ENCODE measurements at regions of chr10 and their contacts with region 1.

Region 1: DNA sequence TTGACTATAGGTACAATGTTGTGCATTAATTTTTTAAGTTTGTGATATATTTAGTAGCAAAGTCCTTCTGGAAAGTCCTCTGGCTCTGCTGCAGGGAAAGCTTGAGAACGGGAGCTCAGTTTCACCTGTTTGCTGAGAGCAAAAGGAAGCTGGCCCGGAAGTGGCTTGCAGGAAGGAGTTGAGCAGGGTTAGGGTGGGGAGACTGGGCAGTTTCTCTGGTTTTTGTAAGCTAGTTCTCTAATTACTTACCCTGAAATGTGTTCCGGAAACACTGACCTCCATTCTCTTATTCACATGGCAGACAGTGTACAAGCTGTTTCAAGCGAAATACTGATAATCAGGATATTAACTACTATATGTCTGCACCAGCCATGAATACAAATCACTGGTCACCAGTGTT is 22.3 kb downstream of the MAP3K8 start:
- DNase-seq: peak in 1 of 2 donors; percentile 61
- ATAC-seq: peak; percentile 71 to 75 (median 73)
- H3K4me3 ChIP-seq: peak overlapping the region; percentile 5
- H3K4me3 Mint-ChIP-seq: peak overlapping the region; percentile 75
- H3K27ac ChIP-seq: peak overlapping the region; percentile 82
- H3K27ac Mint-ChIP-seq: peak overlapping the region; percentile 83 to 88
- H3K4me1 ChIP-seq: peaks cover 45% of the 10 kb centered on the region
- H3K4me1 Mint-ChIP-seq: peaks cover 32 to 44% of the 10 kb centered on the region in 2 donors
- H3K27me3 ChIP-seq: no peaks in the 10 kb centered on the region
- H3K27me3 Mint-ChIP-seq: no peaks in the 10 kb centered on the region
- CTCF ChIP-seq: no peak

Region 2: DNA sequence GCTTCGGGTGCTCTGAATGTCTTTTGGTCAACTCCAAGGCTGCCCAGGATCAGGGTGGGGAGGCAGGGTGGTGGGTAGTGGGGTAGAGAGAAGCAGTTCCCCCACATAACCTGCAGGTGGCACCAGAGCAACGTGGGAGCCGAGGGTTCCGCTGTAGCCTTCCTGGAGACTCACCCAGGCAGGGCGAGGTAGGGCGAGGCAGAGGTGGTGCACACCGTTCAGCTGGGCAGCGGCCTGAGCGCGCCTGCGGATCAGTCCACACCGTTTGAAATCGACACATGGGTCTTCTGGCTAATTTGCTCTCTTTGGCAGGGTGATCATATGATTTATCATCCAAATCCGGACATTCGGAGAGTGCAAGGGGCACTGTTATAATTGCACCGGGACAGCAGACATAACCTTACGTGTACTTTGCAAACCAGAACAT is 63.7 kb before region 1 on chr10:
- intact Hi-C with region 1: no loop called
- DNase-seq: peak; percentile 69 to 86
- ATAC-seq: peak; percentile 95 to 100 (median 100)
- H3K4me3 ChIP-seq: no peak overlapping the region
- H3K4me3 Mint-ChIP-seq: no peak overlapping the region
- H3K27ac ChIP-seq: no peak overlapping the region
- H3K27ac Mint-ChIP-seq: no peak overlapping the region
- H3K4me1 ChIP-seq: peaks cover 6% of the 10 kb centered on the region
- H3K4me1 Mint-ChIP-seq: peaks cover 4 to 5% of the 10 kb centered on the region in 2 donors
- H3K27me3 ChIP-seq: no peaks in the 10 kb centered on the region
- H3K27me3 Mint-ChIP-seq: peaks cover 6 to 16% of the 10 kb centered on the region in 2 donors
- CTCF ChIP-seq: peak; percentile 97

Region 3: DNA sequence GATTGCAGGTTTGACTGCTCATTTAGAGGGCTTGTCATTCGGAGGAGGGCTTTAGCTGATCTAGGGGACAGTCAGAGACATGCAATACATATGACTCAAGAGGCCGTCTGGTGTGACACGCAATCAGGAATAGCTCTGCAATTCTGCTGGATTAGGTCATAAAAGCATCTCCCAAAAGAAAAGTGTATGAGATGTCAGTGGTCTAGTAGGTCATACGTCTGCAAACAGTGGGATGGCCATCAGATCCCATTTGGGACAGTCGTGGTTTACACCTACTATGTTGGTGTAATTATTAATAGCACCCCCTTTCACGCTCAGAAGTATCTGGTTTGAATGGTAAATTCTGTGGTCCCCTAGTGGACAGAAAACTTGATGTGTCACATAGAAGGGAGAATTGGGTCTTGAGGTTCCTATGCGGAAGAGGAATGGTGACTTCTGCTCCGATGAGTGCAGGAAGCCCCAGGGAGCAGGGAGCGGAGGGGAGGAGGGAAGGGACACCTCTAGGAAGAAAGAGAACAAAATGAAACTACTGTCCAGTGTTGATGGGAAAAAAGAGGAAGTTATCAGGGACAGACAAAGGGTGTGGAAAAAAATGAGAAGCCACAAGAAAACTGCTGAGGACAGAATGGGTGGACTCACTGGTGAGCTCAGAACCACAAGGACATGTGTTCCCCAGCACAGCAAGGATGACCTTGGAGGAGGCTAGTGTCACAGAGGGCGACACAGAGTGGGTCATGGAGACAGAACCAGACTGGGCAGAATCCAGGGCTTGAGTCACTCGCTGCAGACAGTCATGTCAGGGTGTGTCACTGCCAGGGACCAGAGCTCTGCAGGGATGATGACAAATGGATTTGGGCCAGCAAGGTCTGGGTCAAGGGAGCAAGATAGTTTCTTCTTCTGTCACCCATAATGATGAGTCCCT is 37.6 kb after region 1 on chr10:
- intact Hi-C with region 1: loop called (anchors 2 kb)
- DNase-seq: peak; percentile 21 to 27
- ATAC-seq: peak; percentile 45 to 77 (median 53)
- H3K4me3 ChIP-seq: no peak overlapping the region
- H3K4me3 Mint-ChIP-seq: peak overlapping the region; percentile 71
- H3K27ac ChIP-seq: peak overlapping the region; percentile 24
- H3K27ac Mint-ChIP-seq: peak overlapping the region; percentile 74 to 79
- H3K4me1 ChIP-seq: peaks cover 89% of the 10 kb centered on the region
- H3K4me1 Mint-ChIP-seq: peaks cover 85 to 96% of the 10 kb centered on the region in 2 donors
- H3K27me3 ChIP-seq: no peaks in the 10 kb centered on the region
- H3K27me3 Mint-ChIP-seq: no peaks in the 10 kb centered on the region
- CTCF ChIP-seq: no peak

Measured in natural killer cell (primary cell).